MCF 10A (cell line): ENCODE measurements at regions of chr15 and their contacts with region 1.

Region 1: GRCh38 chr15:63348392-63348791 is 33.3 kb downstream of the CA12 start:
- DNase-seq: peak; percentile 82
- H3K4me3 Mint-ChIP-seq: peak overlapping the region; percentile 62
- H3K27ac Mint-ChIP-seq: peak overlapping the region; percentile 90
- H3K4me1 Mint-ChIP-seq: peaks cover 37% of the 10 kb centered on the region
- H3K27me3 Mint-ChIP-seq: no peaks in the 10 kb centered on the region
- CTCF ChIP-seq: no peak

Region 2: DNA sequence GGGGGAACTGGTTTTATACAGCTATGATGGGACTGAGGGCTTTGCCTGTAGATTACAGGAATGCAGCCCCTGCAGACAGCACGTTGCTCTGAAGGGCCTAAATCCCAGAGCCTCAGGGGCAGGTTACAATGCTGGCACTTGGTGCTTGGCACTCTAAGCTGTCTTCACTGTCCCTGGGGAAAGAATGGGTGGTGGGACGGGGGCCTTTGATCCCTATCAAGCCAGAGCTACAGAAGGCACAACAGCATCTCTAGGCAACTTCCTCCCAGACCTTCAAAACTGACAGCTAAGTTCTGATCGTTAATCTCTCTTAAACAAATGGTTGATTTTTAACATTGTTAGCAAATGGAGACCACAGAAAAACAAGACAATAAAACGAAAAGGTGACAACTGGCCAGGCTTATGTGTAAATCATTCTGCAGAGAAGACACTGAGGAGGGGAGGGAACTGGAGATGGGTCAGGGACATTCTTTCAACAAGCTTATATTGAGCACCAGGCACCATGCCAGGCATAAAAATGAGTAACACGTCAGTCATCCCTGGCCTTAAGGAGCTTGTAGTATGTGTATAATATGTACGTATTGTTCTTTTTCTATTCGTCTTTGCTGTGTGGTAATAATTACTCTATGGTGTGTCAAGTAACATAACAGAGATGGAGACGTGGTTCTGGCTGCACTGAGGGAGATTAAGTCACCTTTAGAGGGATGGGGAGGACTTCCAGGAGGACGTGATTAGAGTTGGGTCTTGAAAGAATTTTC is 15.8 kb before region 1 on chr15:
- CTCF ChIA-PET with region 1: interaction called, 3 read pairs
- POLR2A ChIA-PET with region 1: interaction called, 17 read pairs
- intact Hi-C with region 1: no loop called
- DNase-seq: peak; percentile 97
- H3K4me3 Mint-ChIP-seq: peak overlapping the region; percentile 2
- H3K27ac Mint-ChIP-seq: peak overlapping the region; percentile 13
- H3K4me1 Mint-ChIP-seq: peaks cover 20% of the 10 kb centered on the region
- H3K27me3 Mint-ChIP-seq: no peaks in the 10 kb centered on the region
- CTCF ChIP-seq: no peak

Region 3: DNA sequence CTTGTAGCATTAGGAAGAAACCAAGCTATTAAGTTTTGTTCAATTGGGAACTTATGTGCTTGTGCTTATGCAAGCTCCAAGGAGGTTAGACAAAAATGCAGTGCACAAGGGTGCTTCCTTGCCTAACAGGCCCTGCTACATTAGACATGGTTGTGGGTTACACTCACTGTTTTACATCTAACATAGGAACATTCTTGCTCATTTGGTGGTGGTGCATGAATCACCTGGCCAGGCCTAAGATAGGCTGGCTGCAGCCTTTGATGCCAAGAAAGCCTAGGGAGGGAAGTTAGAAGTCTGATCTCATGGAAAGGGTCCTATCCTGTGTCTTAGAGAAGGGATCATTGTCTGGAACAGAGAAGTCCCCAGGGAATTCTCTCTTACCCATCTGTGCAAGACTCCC is 10.2 kb before region 1 on chr15:
- CTCF ChIA-PET with region 1: interaction called, 4 read pairs
- POLR2A ChIA-PET with region 1: interaction called, 17 read pairs
- intact Hi-C with region 1: no loop called
- DNase-seq: no peak
- H3K4me3 Mint-ChIP-seq: no peak overlapping the region
- H3K27ac Mint-ChIP-seq: no peak overlapping the region
- H3K4me1 Mint-ChIP-seq: peaks cover under 1% of the 10 kb centered on the region
- H3K27me3 Mint-ChIP-seq: no peaks in the 10 kb centered on the region
- CTCF ChIP-seq: no peak

Region 4: DNA sequence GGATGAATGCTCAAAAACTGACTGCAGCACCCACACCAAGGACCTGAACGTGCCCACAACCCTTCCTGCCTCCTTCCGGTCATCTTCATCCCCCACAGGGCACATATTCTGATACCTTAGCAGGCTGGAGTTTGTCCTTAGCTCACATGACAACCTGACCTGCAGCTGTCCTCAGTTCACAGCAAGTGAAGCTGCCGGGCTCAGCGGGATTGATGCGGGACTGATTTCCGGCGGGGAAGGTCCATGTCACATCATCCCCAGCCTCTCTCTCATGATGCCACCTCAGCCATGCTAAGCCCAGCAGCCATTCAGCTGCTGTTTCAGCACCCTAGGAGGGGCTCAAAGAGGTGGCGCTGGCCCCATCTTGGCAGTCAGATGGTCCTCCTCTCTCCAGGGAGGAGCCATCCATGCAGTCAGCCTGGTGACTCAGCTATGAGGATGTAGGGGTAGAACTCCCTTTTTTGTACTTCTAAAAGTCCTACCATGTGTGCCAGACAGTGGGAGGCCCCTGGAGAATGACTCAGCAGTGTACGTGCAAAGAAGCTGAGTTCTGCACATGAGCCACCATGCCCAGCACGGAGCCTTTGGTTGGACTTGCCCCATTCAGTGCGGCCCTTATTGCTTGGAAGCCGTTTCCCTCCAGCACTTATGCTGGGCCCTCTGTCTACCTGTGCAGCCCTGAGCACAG is 23.8 kb after region 1 on chr15:
- CTCF ChIA-PET with region 1: interaction called, 5 read pairs
- POLR2A ChIA-PET with region 1: interaction called, 23 read pairs
- intact Hi-C with region 1: no loop called
- DNase-seq: peak; percentile 96
- H3K4me3 Mint-ChIP-seq: peak overlapping the region; percentile 65
- H3K27ac Mint-ChIP-seq: peak overlapping the region; percentile 95
- H3K4me1 Mint-ChIP-seq: peaks cover 54% of the 10 kb centered on the region
- H3K27me3 Mint-ChIP-seq: no peaks in the 10 kb centered on the region
- CTCF ChIP-seq: no peak

Region 5: GRCh38 chr15:63381301-63382204 is 33.2 kb after region 1 on chr15 and contains the start of gene CA12:
- CTCF ChIA-PET with region 1: interaction called, 3 read pairs
- POLR2A ChIA-PET with region 1: interaction called, 21 read pairs
- intact Hi-C with region 1: no loop called
- DNase-seq: peak; percentile 54
- H3K4me3 Mint-ChIP-seq: peak within 1 kb of the TSS; percentile 82
- H3K27ac Mint-ChIP-seq: peak within 1 kb of the TSS; percentile 85
- H3K4me1 Mint-ChIP-seq: peaks cover 30% of the 10 kb centered on the region
- H3K27me3 Mint-ChIP-seq: no peaks in the 10 kb centered on the region
- CTCF ChIP-seq: no peak
- total RNA-seq, gene CA12: 19.6 and 20.3 TPM in 2 replicates